A549 (cell line): ENCODE measurements at regions of chr10 and their contacts with region 1.

Region 1: DNA sequence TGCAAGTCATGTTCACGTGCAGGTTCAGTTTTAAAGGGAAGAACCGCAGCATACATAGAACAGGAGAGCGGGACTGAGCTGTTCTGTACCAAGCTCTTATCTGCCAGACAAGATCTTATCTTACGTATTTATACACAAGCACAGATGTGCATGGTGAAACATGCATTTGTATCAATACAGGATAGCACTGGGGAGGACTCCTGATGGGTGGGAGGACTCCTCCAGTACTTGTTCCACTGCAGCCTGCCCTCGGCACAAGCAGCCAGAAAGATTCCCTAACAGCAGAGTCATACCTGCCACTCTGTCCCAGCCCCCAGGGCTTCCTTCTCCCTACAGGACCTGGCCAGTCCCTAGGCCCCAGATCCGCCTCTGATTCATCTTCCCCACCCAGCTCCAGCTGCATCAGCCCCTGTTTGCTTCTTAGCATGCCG is 13.2 kb upstream of the PRKCQ start:
- DNase-seq: no peak
- ATAC-seq: no peak
- H3K4me3 ChIP-seq: no peak overlapping the region
- H3K27ac ChIP-seq: no peak overlapping the region
- H3K4me1 ChIP-seq: no peaks in the 10 kb centered on the region
- CTCF ChIP-seq: no peak
- EP300 ChIP-seq: no peak
- POLR2A ChIP-seq: no peak
- RAD21 ChIP-seq: no peak

Region 2: GRCh38 chr10:6580279-6581029 is 12.8 kb before region 1 on chr10:
- CTCF ChIA-PET with region 1: interaction called, 26 read pairs
- POLR2A ChIA-PET with region 1: no interaction called
- DNase-seq: peak; percentile 47 to 78
- ATAC-seq: peak; percentile 96 to 97
- H3K4me3 ChIP-seq: peak overlapping the region; percentile 66
- H3K27ac ChIP-seq: peak overlapping the region; percentile 87 to 98
- H3K4me1 ChIP-seq: peaks cover 11% of the 10 kb centered on the region
- CTCF ChIP-seq: peak; percentile 93
- EP300 ChIP-seq: no peak
- POLR2A ChIP-seq: peak; percentile 70
- RAD21 ChIP-seq: peak; percentile 8 to 58; a peak in 3 of 5 replicates